AG04449 (cell line): ENCODE measurements at regions of chr1 and their contacts with region 1.

Region 1: GRCh38 chr1:240004086-240004749 is 87.5 kb upstream of the FMN2 start:
- DNase-seq: no peak
- H3K4me3 ChIP-seq: no peak overlapping the region
- CTCF ChIP-seq: peak; percentile 78

Region 2: GRCh38 chr1:239884796-239885195 is 119.4 kb before region 1 on chr1:
- CTCF ChIA-PET with region 1: no interaction called
- POLR2A ChIA-PET with region 1: no interaction called
- DNase-seq: no peak
- H3K4me3 ChIP-seq: no peak overlapping the region
- CTCF ChIP-seq: no peak

Region 3: DNA sequence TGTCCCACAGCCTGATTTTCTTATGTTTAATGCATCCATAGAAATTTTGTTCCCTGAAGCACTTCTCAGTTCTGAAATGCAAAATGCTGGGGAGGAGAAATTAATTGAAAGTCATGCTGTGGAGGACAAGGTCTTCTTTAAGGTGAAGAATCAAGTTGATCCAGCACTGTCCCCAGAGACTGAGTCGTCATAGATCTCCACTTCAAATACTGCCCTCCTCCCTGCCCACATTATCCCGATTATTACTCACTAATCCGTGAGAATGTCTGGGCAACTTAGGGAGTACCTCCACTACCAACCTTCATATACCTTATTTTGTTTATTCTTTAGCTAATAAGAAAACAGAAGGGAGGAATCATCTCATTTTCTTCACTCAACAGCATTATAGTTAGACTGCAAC is 17.5 kb after region 1 on chr1:
- CTCF ChIA-PET with region 1: interaction called, 14 read pairs
- POLR2A ChIA-PET with region 1: no interaction called
- DNase-seq: no peak
- H3K4me3 ChIP-seq: no peak overlapping the region
- CTCF ChIP-seq: no peak

Region 4: GRCh38 chr1:240136402-240136801 is 132.2 kb after region 1 on chr1:
- CTCF ChIA-PET with region 1: no interaction called
- POLR2A ChIA-PET with region 1: no interaction called
- DNase-seq: no peak
- H3K4me3 ChIP-seq: no peak overlapping the region
- CTCF ChIP-seq: no peak